Gastrocnemius medialis (tissue), 4 donors: ENCODE measurements at regions of chr17 and their contacts with region 1.

Region 1: GRCh38 chr17:20226814-20227482 is 217.8 kb downstream of the SPECC1 start:
- DNase-seq: peak; percentile 34 to 56
- ATAC-seq: peak; percentile 63 to 68
- H3K4me3 ChIP-seq: no peak overlapping the region
- H3K27ac ChIP-seq: peak overlapping the region in 1 of 4 donors; percentile 77
- H3K4me1 ChIP-seq: peaks cover 3 to 4% of the 10 kb centered on the region in 2 donors
- H3K27me3 ChIP-seq: no peaks in the 10 kb centered on the region
- CTCF ChIP-seq: peak; percentile 64 to 76 (median 65)
- POLR2A ChIP-seq: no peak

Region 2: DNA sequence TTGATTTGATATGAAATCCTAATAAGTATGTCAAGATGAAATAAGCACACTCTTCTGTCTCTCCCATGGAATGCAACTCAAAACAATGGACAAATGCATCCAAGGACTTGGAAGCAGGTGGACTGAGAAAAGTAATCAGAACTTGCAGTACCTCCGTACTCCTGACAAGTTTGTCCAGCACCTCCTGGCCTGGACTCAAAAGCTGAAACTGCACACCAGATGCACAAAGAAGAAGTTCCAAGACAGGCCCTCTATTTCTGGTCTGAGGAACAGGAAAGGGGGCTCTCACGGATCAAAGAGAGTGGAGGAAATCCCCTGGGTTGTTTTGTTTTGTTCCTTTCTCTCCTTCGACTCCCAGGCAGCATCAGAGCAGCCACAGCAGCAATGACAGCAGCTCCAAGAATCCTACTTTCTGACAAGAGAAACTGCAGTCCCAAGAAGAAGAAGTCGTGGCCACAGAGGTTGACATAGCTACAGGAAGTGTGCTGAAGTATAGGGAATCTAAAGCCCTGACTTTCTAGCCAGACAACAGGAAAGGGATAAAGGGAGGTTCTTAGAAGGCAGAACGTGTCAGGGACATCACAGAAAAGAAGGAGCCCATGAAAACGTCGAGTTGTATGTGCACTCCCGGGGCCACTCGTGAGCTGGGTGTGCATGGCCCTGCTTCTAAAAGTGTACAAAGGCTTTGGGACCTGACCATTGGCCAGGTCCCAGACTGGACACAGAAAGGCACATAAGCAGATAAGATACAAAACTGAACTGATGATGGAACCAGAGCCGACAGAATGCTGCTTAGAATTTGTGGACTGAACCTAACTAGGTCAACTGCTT is 278.6 kb before region 1 on chr17:
- in situ Hi-C with region 1: no loop called
- intact Hi-C with region 1: no loop called
- DNase-seq: no peak
- ATAC-seq: peak in 1 of 2 donors; percentile 30
- H3K4me3 ChIP-seq: no peak overlapping the region
- H3K27ac ChIP-seq: peak overlapping the region in 1 of 4 donors; percentile 13
- H3K4me1 ChIP-seq: peaks cover 18 to 19% of the 10 kb centered on the region in 2 donors
- H3K27me3 ChIP-seq: no peaks in the 10 kb centered on the region
- CTCF ChIP-seq: no peak
- POLR2A ChIP-seq: no peak

Region 3: GRCh38 chr17:19979917-19980770 is 246.8 kb before region 1 on chr17:
- in situ Hi-C with region 1: no loop called
- intact Hi-C with region 1: loop called (anchors 10 kb)
- DNase-seq: peak in 1 of 2 donors; percentile 28
- ATAC-seq: no peak
- H3K4me3 ChIP-seq: no peak overlapping the region
- H3K27ac ChIP-seq: peak overlapping the region in 1 of 4 donors; percentile 21
- H3K4me1 ChIP-seq: peaks cover 17 to 30% of the 10 kb centered on the region in 2 donors
- H3K27me3 ChIP-seq: no peaks in the 10 kb centered on the region
- CTCF ChIP-seq: no peak
- POLR2A ChIP-seq: no peak

Region 4: GRCh38 chr17:20266806-20267458 is 40.0 kb after region 1 on chr17:
- in situ Hi-C with region 1: no loop called
- intact Hi-C with region 1: loop called (anchors 5 kb)
- DNase-seq: no peak
- ATAC-seq: no peak
- H3K4me3 ChIP-seq: no peak overlapping the region
- H3K27ac ChIP-seq: peak overlapping the region in 1 of 4 donors; percentile 65
- H3K4me1 ChIP-seq: peaks cover 4 to 11% of the 10 kb centered on the region in 2 donors
- H3K27me3 ChIP-seq: no peaks in the 10 kb centered on the region
- CTCF ChIP-seq: no peak
- POLR2A ChIP-seq: no peak

Region 5: DNA sequence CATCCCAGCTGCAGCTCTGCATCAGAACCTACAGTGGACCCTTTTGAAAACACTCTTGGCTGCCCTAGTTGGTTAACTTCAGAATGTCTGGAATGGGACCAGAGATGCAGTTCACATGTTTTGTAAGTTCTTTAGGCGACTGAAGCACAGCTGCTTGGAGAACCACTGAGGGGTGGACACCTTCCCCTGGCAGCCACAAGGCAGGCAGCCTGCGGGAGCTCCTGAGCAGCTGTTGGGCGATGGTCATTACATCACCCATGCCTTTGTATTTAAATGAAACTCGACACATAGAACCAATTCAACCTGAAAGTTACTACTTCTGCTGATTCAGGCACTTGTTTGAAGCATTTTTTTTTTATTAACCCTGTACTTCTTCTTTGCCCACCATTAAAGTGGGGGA is 88.9 kb after region 1 on chr17:
- in situ Hi-C with region 1: loop called in 2 of 4 experiments (anchors 10 to 25 kb)
- intact Hi-C with region 1: no loop called
- DNase-seq: no peak
- ATAC-seq: no peak
- H3K4me3 ChIP-seq: no peak overlapping the region
- H3K27ac ChIP-seq: no peak overlapping the region
- H3K4me1 ChIP-seq: no peaks in the 10 kb centered on the region
- H3K27me3 ChIP-seq: no peaks in the 10 kb centered on the region
- CTCF ChIP-seq: no peak
- POLR2A ChIP-seq: no peak